Spleen (tissue), 13 donors: ENCODE measurements at regions of chr17 and their contacts with region 1.

Region 1: DNA sequence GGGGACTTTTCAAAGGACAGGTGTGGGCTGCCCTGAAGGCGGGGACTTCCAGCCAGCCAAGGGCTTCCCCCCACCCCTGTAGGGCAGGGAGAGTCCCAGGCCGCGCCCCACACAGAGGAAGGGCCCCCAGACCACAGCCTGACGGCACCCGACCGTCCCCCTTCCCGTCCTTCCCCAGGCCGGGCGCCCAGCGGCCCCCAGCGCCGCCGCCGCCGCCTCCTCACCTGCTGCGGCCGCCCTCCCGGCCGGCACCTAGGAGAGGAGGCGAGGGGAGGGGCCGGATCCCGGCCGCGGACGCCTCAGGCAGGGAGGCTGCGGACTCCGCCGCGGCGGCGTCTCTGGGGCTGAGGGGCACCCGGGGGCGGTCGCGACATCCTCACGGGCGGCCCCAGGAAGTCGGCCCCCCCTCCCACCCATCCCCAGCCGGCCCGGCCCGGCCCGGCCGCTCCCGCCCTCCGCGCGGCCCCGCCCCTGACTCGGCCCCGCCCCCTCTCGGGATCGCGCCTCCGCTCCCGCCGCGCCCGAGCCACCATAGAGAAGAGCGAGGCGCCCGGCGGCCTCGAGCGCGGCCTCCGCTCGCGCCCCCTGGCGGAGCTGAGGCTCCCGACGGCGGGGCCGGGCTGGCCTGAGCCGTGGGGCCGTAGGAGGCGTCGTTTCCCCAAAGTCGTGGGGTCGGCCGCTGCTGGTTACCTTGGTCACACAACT is 25.5 kb upstream of the RFFL start:
- DNase-seq: peak; percentile 97
- H3K4me3 ChIP-seq: peak overlapping the region; percentile 71 to 97 (median 90)
- H3K27ac ChIP-seq: peak overlapping the region; percentile 90 to 98 (median 96)
- H3K4me1 ChIP-seq: peaks cover 12 to 62% (median 38%) of the 10 kb centered on the region in 6 donors
- H3K27me3 ChIP-seq: no peaks in the 10 kb centered on the region
- CTCF ChIP-seq: peak in 10 of 11 experiments; percentile 63 to 95 (median 90)
- POLR2A ChIP-seq: peak in 1 of 3 donors; percentile 18

Region 2: GRCh38 chr17:34998205-34998604 is 90.8 kb before region 1 on chr17:
- intact Hi-C with region 1: loop called (anchors 2 kb)
- DNase-seq: peak; percentile 94
- H3K4me3 ChIP-seq: no peak overlapping the region
- H3K27ac ChIP-seq: peak overlapping the region in 7 of 8 donors; percentile 19 to 74 (median 43)
- H3K4me1 ChIP-seq: peaks cover 0 to 33% (median 17%) of the 10 kb centered on the region in 6 donors
- H3K27me3 ChIP-seq: no peaks in the 10 kb centered on the region
- CTCF ChIP-seq: peak; percentile 58 to 92 (median 85)
- POLR2A ChIP-seq: no peak

Region 3: GRCh38 chr17:35022536-35023063 is 66.4 kb before region 1 on chr17:
- intact Hi-C with region 1: loop called (anchors 10 kb)
- DNase-seq: peak; percentile 94
- H3K4me3 ChIP-seq: peak overlapping the region in 1 of 8 donors; percentile 37
- H3K27ac ChIP-seq: peak overlapping the region; percentile 74 to 91 (median 84)
- H3K4me1 ChIP-seq: peaks cover 15 to 50% (median 32%) of the 10 kb centered on the region in 6 donors
- H3K27me3 ChIP-seq: no peaks in the 10 kb centered on the region
- CTCF ChIP-seq: no peak
- POLR2A ChIP-seq: no peak

Region 4: GRCh38 chr17:35161281-35161761 is 72.3 kb after region 1 on chr17:
- intact Hi-C with region 1: no loop called
- DNase-seq: peak; percentile 38
- H3K4me3 ChIP-seq: peak overlapping the region in 1 of 8 donors; percentile 40
- H3K27ac ChIP-seq: peak overlapping the region in 7 of 8 donors; percentile 1 to 80 (median 62)
- H3K4me1 ChIP-seq: peaks cover 0 to 40% (median 17%) of the 10 kb centered on the region in 6 donors
- H3K27me3 ChIP-seq: no peaks in the 10 kb centered on the region
- CTCF ChIP-seq: no peak
- POLR2A ChIP-seq: no peak